ENCODE measurements at regions of chr3 and their contacts with region 1.

Region 1: DNA sequence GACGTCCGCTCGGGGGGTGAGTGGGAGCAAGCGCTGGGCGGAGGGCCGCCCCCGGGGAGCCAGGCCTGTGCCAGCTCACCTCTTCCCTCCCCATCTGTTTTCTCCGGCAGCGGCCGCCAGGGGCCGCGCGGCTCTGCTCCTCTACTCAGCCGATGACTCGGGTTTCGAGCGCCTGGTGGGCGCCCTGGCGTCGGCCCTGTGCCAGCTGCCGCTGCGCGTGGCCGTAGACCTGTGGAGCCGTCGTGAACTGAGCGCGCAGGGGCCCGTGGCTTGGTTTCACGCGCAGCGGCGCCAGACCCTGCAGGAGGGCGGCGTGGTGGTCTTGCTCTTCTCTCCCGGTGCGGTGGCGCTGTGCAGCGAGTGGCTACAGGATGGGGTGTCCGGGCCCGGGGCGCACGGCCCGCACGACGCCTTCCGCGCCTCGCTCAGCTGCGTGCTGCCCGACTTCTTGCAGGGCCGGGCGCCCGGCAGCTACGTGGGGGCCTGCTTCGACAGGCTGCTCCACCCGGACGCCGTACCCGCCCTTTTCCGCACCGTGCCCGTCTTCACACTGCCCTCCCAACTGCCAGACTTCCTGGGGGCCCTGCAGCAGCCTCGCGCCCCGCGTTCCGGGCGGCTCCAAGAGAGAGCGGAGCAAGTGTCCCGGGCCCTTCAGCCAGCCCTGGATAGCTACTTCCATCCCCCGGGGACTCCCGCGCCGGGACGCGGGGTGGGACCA is 632 bp upstream of the CRELD1 start:
- DNase-seq: peak; percentile 83 to 90 (median 85)
- H3K4me3 ChIP-seq: peak overlapping the region; percentile 13 to 87
- H3K4me3 Mint-ChIP-seq: peak overlapping the region; percentile 95 to 98 (median 97)
- H3K27ac ChIP-seq: peak overlapping the region; percentile 89
- H3K27ac Mint-ChIP-seq: peak overlapping the region; percentile 94 to 100 (median 99)
- H3K4me1 ChIP-seq: peaks cover 34% of the 10 kb centered on the region
- H3K4me1 Mint-ChIP-seq: peaks cover 18 to 55% (median 39%) of the 10 kb centered on the region in 4 donors
- H3K27me3 ChIP-seq: no peaks in the 10 kb centered on the region
- H3K27me3 Mint-ChIP-seq: no peaks in the 10 kb centered on the region

Region 2: GRCh38 chr3:9749645-9750555 is 183.1 kb before region 1 on chr3 and contains the start of gene OGG1:
- CTCF ChIA-PET with region 1: no interaction called
- POLR2A ChIA-PET with region 1: interaction called, 18 read pairs
- intact Hi-C with region 1: loop called (anchors 1 kb)
- DNase-seq: peak; percentile 95 to 98 (median 96)
- H3K4me3 ChIP-seq: peak within 1 kb of the TSS; percentile 58 to 92
- H3K4me3 Mint-ChIP-seq: peak within 1 kb of the TSS; percentile 88 to 98 (median 96)
- H3K27ac ChIP-seq: peak within 1 kb of the TSS; percentile 59
- H3K27ac Mint-ChIP-seq: peak within 1 kb of the TSS; percentile 93 to 98 (median 95)
- H3K4me1 ChIP-seq: peaks cover 38% of the 10 kb centered on the region
- H3K4me1 Mint-ChIP-seq: peaks cover 25 to 54% (median 39%) of the 10 kb centered on the region in 4 donors
- H3K27me3 ChIP-seq: no peaks in the 10 kb centered on the region
- H3K27me3 Mint-ChIP-seq: no peaks in the 10 kb centered on the region
- total RNA-seq, gene OGG1: 40.4 to 46.9 TPM

Region 3: DNA sequence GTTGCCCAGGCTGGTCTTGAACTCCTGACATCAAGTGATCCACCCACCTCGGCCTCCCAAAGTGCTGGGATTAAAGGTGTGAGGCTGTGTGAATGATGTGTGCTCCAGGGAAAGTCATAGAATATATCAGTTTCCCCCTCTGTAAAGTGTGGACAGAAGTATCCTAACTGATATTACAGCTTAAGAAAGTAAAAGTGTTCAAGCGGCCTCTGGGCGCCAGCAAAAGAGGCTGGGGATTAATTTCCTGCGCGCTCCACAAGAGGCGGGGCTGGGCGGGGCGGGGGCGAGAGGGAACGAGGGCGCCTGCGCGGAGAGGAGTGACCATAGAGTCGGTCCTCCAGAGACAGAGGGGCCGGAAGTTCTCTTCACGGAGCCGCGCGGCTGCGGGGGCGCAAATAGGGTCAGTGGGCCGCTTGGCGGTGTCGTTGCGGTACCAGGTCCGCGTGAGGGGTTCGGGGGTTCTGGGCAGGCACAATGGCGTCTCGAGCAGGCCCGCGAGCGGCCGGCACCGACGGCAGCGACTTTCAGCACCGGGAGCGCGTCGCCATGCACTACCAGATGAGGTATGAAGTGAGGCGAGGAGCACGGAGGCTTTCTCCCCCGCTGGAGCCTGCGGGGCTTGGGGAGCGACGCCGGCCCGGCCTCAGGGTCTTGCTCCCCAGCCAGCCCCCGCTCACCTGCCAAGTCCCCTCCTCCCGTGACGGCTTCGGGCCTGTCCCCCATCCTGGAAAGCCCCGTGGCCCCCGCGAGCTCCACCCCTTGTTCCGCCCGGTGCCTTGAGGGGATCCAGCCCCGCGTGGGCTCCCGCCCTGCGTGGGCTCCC is 42.5 kb before region 1 on chr3 and contains the start of gene JAGN1:
- CTCF ChIA-PET with region 1: interaction called, 23 read pairs
- POLR2A ChIA-PET with region 1: interaction called, 75 read pairs
- intact Hi-C with region 1: loop called (anchors 1 kb)
- DNase-seq: peak; percentile 87 to 92 (median 89)
- H3K4me3 ChIP-seq: peak within 1 kb of the TSS; percentile 56 to 93
- H3K4me3 Mint-ChIP-seq: peak within 1 kb of the TSS; percentile 94 to 100 (median 98)
- H3K27ac ChIP-seq: peak within 1 kb of the TSS; percentile 100
- H3K27ac Mint-ChIP-seq: peak within 1 kb of the TSS; percentile 99 to 100 (median 99)
- H3K4me1 ChIP-seq: peaks cover 39% of the 10 kb centered on the region
- H3K4me1 Mint-ChIP-seq: peaks cover 22 to 51% (median 34%) of the 10 kb centered on the region in 4 donors
- H3K27me3 ChIP-seq: no peaks in the 10 kb centered on the region
- H3K27me3 Mint-ChIP-seq: no peaks in the 10 kb centered on the region
- total RNA-seq, gene JAGN1: 26.5 to 29.1 TPM

Region 4: GRCh38 chr3:9951962-9952805 is 19.2 kb after region 1 on chr3 and contains the start of gene PRRT3:
- CTCF ChIA-PET with region 1: interaction called, 48 read pairs
- POLR2A ChIA-PET with region 1: interaction called, 225 read pairs
- intact Hi-C with region 1: loop called (anchors 1 kb)
- DNase-seq: peak; percentile 52 to 64 (median 58)
- H3K4me3 ChIP-seq: peak within 1 kb of the TSS; percentile 68 to 72
- H3K4me3 Mint-ChIP-seq: peak within 1 kb of the TSS; percentile 86 to 91 (median 90)
- H3K27ac ChIP-seq: peak within 1 kb of the TSS; percentile 50
- H3K27ac Mint-ChIP-seq: peak within 1 kb of the TSS; percentile 62 to 80 (median 72)
- H3K4me1 ChIP-seq: peaks cover 11% of the 10 kb centered on the region
- H3K4me1 Mint-ChIP-seq: peaks cover 6 to 28% (median 13%) of the 10 kb centered on the region in 4 donors
- H3K27me3 ChIP-seq: no peaks in the 10 kb centered on the region
- H3K27me3 Mint-ChIP-seq: no peaks in the 10 kb centered on the region
- total RNA-seq, gene PRRT3: 8.2 to 9.8 TPM

Region 5: GRCh38 chr3:10115326-10116137 is 182.5 kb after region 1 on chr3 and contains the start of gene BRK1:
- CTCF ChIA-PET with region 1: no interaction called
- POLR2A ChIA-PET with region 1: interaction called, 9 read pairs
- intact Hi-C with region 1: loop called (anchors 2 kb)
- DNase-seq: peak; percentile 89 to 95 (median 93)
- H3K4me3 ChIP-seq: peak within 1 kb of the TSS; percentile 89 to 98
- H3K4me3 Mint-ChIP-seq: peak within 1 kb of the TSS; percentile 95 to 100 (median 99)
- H3K27ac ChIP-seq: peak within 1 kb of the TSS; percentile 84
- H3K27ac Mint-ChIP-seq: peak within 1 kb of the TSS; percentile 96 to 100 (median 98)
- H3K4me1 ChIP-seq: peaks cover 39% of the 10 kb centered on the region
- H3K4me1 Mint-ChIP-seq: peaks cover 22 to 52% (median 31%) of the 10 kb centered on the region in 4 donors
- H3K27me3 ChIP-seq: no peaks in the 10 kb centered on the region
- H3K27me3 Mint-ChIP-seq: peaks cover 0 to 1% of the 10 kb centered on the region in 2 donors
- total RNA-seq, gene BRK1: 73.0 to 78.1 TPM

Region 6: GRCh38 chr3:10322352-10322710 is 389.3 kb after region 1 on chr3:
- CTCF ChIA-PET with region 1: interaction called, 25 read pairs
- POLR2A ChIA-PET with region 1: interaction called, 31 read pairs
- intact Hi-C with region 1: loop called (anchors 1 kb)
- DNase-seq: peak in 3 of 5 donors; percentile 22 to 33 (median 23)
- H3K4me3 ChIP-seq: no peak overlapping the region
- H3K4me3 Mint-ChIP-seq: peak overlapping the region in 3 of 8 donors; percentile 20 to 92 (median 46)
- H3K27ac ChIP-seq: no peak overlapping the region
- H3K27ac Mint-ChIP-seq: peak overlapping the region in 5 of 7 donors; percentile 81 to 97 (median 86)
- H3K4me1 ChIP-seq: peaks cover 28% of the 10 kb centered on the region
- H3K4me1 Mint-ChIP-seq: peaks cover 18 to 42% (median 29%) of the 10 kb centered on the region in 4 donors
- H3K27me3 ChIP-seq: peaks cover 6% of the 10 kb centered on the region
- H3K27me3 Mint-ChIP-seq: peaks cover 2 to 5% of the 10 kb centered on the region in 2 donors